Activated CD8-positive, alpha-beta T cell treated with anti-CD3 and anti-CD28 coated beads for 36 hours (primary cell): ENCODE measurements at regions of chr12 and their contacts with region 1.

Region 1: GRCh38 chr12:45728630-45729232 is 775 bp upstream of the ARID2 start:
- DNase-seq: peak; percentile 97
- ATAC-seq: peak; percentile 77
- H3K4me3 Mint-ChIP-seq: peak overlapping the region; percentile 88
- H3K27ac Mint-ChIP-seq: peak overlapping the region; percentile 99
- H3K4me1 Mint-ChIP-seq: peaks cover 18% of the 10 kb centered on the region
- H3K27me3 Mint-ChIP-seq: no peaks in the 10 kb centered on the region
- CTCF ChIP-seq: peak; percentile 89

Region 2: DNA sequence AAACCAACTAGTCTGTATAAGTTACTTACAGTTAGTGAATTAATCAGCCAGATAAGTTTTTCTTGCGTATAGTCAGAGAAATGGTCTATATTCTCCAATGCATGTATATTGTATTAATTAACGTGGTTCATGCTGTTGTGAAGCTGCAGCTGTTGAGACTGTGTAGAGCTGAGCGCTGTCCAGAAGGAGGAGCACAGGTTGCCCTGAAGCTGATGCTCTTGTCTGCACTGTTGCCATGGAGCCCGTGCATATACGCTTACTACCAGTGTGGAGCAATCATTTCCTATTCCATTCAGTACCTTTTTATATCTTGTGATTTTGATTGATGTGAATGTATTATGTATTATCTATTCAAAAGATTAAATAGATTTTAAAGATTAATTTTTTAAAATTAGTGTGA is 73.5 kb before region 1 on chr12:
- CTCF ChIA-PET with region 1: interaction called, 22 read pairs
- POLR2A ChIA-PET with region 1: interaction called, 6 read pairs
- intact Hi-C with region 1: no loop called
- DNase-seq: peak; percentile 73
- ATAC-seq: peak; percentile 100
- H3K4me3 Mint-ChIP-seq: no peak overlapping the region
- H3K27ac Mint-ChIP-seq: no peak overlapping the region
- H3K4me1 Mint-ChIP-seq: peaks cover 5% of the 10 kb centered on the region
- H3K27me3 Mint-ChIP-seq: peaks cover 19% of the 10 kb centered on the region
- CTCF ChIP-seq: peak; percentile 32

Region 3: GRCh38 chr12:45670346-45671065 is 58.2 kb before region 1 on chr12:
- CTCF ChIA-PET with region 1: interaction called, 35 read pairs
- POLR2A ChIA-PET with region 1: interaction called, 20 read pairs
- intact Hi-C with region 1: loop called (anchors 1 kb)
- DNase-seq: peak; percentile 9
- ATAC-seq: peak; percentile 62
- H3K4me3 Mint-ChIP-seq: no peak overlapping the region
- H3K27ac Mint-ChIP-seq: no peak overlapping the region
- H3K4me1 Mint-ChIP-seq: peaks cover 45% of the 10 kb centered on the region
- H3K27me3 Mint-ChIP-seq: no peaks in the 10 kb centered on the region
- CTCF ChIP-seq: no peak

Region 4: GRCh38 chr12:45745861-45746277 is 17.1 kb after region 1 on chr12:
- CTCF ChIA-PET with region 1: interaction called, 8 read pairs
- POLR2A ChIA-PET with region 1: interaction called, 13 read pairs
- intact Hi-C with region 1: no loop called
- DNase-seq: no peak
- ATAC-seq: peak; percentile 51
- H3K4me3 Mint-ChIP-seq: no peak overlapping the region
- H3K27ac Mint-ChIP-seq: no peak overlapping the region
- H3K4me1 Mint-ChIP-seq: peaks cover 56% of the 10 kb centered on the region
- H3K27me3 Mint-ChIP-seq: no peaks in the 10 kb centered on the region
- CTCF ChIP-seq: peak; percentile 57

Region 5: DNA sequence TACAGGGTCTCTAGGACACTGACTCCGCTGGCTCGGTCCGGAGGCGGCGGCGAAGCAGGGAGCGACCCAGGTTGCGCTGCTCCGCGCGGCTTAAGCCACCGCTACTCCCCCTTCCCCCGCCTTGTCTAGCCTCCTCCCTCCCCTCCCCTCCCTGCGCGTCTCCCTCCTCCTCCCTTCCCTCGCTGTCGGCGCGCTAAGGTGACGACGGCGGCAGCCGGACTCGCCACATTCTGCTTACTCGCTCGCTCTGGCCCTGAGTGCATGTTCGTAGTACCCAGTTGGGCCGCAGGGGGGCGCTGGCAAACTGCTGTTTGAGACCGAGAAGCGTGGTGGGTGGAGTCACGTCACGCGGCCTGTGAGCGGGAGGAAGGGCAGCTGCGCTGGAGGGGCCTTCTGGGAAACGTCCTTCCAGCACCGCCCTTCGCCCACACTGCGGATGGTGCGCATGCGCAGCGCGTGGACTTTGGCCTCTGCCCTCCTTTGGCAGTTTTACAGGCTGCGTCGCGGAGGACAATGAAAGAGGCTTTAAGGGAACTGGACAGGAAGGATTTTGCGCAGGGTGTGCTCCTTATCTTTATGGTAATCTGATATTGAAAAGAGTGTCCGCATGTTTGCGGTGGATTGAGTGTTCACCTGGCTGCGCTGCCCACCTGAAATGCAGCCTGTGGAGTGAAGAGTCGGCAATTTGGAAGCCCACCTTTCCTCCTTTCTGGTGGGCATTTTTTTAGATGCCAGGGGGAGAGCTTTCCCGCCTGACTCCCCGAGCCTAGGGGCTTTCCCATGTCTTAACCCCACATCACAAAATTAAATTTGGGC is 261.9 kb after region 1 on chr12 and contains the start of gene SCAF11:
- CTCF ChIA-PET with region 1: no interaction called
- POLR2A ChIA-PET with region 1: interaction called, 25 read pairs
- intact Hi-C with region 1: loop called (anchors 5 kb)
- DNase-seq: peak; percentile 100
- ATAC-seq: peak; percentile 87
- H3K4me3 Mint-ChIP-seq: peak within 1 kb of the TSS; percentile 87
- H3K27ac Mint-ChIP-seq: peak within 1 kb of the TSS; percentile 98
- H3K4me1 Mint-ChIP-seq: peaks cover 36% of the 10 kb centered on the region
- H3K27me3 Mint-ChIP-seq: no peaks in the 10 kb centered on the region
- CTCF ChIP-seq: peak; percentile 74
- total RNA-seq, gene SCAF11: 110 to 117 TPM